ENCODE measurements at regions of chr13 and their contacts with region 1.

Region 1: GRCh38 chr13:76667551-76667950 is 218.7 kb downstream of the KCTD12 start:
- DNase-seq: no peak
- ATAC-seq: peak; percentile 60 to 66
- H3K4me3 ChIP-seq: no peak overlapping the region
- H3K27ac ChIP-seq: no peak overlapping the region
- H3K4me1 ChIP-seq: no peaks in the 10 kb centered on the region
- H3K27me3 ChIP-seq: no peaks in the 10 kb centered on the region
- CTCF ChIP-seq: peak in 2 of 5 experiments; percentile 21 to 22
- POLR2A ChIP-seq: no peak

Region 2: DNA sequence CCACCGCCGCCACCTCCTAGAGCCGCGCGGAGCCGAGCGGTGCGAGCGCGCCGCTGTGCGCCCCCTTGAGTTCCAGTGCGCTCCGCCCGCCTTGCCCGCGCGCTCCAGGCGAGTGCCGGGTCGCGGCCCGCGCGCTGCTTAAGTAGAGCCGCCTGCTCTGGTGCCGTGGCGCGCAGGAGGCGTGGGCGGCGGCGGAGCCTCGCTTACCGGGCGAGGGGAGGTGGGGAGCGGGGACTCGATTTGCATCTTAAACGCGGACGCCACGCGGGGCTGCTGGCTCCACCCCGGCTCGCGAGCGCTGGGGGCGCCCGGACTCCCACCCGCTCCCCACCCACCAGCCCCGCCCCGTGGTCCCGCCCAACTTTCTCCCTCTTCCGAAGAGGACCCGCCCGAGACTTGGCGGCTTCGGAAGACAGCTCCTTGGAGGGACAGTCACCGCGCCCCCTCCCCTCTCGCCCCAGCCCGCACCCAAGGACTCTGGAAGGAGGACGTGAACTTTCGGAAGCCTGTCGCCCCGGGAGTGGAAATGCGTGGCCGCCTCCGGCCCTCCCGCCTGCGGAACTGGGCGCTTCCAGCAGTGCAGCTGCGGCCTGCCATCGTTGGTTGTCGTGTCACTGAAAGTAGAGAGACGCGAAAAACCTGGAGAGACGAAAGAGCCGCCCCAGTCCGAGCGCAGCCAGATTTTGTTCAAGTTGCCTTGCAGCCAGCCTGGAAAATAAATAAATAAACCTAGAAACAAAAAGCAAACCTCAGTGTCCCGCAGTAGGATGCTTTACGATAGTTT is 218.9 kb after region 1 on chr13 and contains the start of gene KCTD12:
- in situ Hi-C with region 1: no loop called
- intact Hi-C with region 1: loop called (anchors 10 kb)
- DNase-seq: peak; percentile 67 to 74
- ATAC-seq: peak; percentile 64 to 66
- H3K4me3 ChIP-seq: peak within 1 kb of the TSS; percentile 71 to 82 (median 76)
- H3K27ac ChIP-seq: peak within 1 kb of the TSS; percentile 69 to 85 (median 82)
- H3K4me1 ChIP-seq: peaks cover 0 to 7% of the 10 kb centered on the region in 2 donors
- H3K27me3 ChIP-seq: peaks cover 3 to 25% (median 24%) of the 10 kb centered on the region in 3 donors
- CTCF ChIP-seq: peak in 2 of 5 experiments; percentile 24 to 42
- POLR2A ChIP-seq: peak; percentile 60 to 83
- total RNA-seq, gene KCTD12: 17.3 to 35.9 (median 27.1) TPM

Measured in gastrocnemius medialis (tissue), 4 donors.